T-cell (primary cell): ENCODE measurements at regions of chr3 and their contacts with region 1.

Region 1: GRCh38 chr3:118229196-118229595 is 805.5 kb downstream of the IGSF11 start:
- DNase-seq: no peak
- ATAC-seq: no peak
- H3K4me3 ChIP-seq: no peak overlapping the region
- H3K4me3 Mint-ChIP-seq: no peak overlapping the region
- H3K27ac ChIP-seq: no peak overlapping the region
- H3K27ac Mint-ChIP-seq: no peak overlapping the region
- H3K4me1 ChIP-seq: no peaks in the 10 kb centered on the region
- H3K4me1 Mint-ChIP-seq: no peaks in the 10 kb centered on the region
- H3K27me3 ChIP-seq: no peaks in the 10 kb centered on the region
- H3K27me3 Mint-ChIP-seq: no peaks in the 10 kb centered on the region

Region 2: GRCh38 chr3:117380631-117381030 is 848.6 kb before region 1 on chr3:
- CTCF ChIA-PET with region 1: no interaction called
- POLR2A ChIA-PET with region 1: interaction called in 1 of 2 experiments, 11 read pairs
- DNase-seq: no peak
- ATAC-seq: no peak
- H3K4me3 ChIP-seq: no peak overlapping the region
- H3K4me3 Mint-ChIP-seq: no peak overlapping the region
- H3K27ac ChIP-seq: no peak overlapping the region
- H3K27ac Mint-ChIP-seq: no peak overlapping the region
- H3K4me1 ChIP-seq: no peaks in the 10 kb centered on the region
- H3K4me1 Mint-ChIP-seq: no peaks in the 10 kb centered on the region
- H3K27me3 ChIP-seq: no peaks in the 10 kb centered on the region
- H3K27me3 Mint-ChIP-seq: no peaks in the 10 kb centered on the region

Region 3: DNA sequence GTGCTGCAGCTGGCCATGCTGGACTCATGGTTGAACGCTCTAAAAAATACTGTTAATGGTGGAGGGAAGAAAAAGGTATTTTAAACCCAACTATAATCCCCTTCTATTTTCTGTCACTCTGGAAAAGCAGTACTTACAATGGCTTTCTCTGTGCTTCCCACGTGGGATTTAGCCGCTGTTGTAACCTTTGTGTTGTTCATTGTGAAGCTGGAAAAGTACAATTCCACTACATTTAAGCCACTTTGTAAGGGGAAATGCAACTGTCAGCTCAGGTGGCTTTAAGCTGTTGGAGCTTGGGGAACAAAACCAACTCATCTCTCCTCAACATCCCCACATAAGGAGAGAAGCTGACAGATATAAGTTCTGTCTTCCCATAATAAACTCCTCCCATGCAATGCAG is 112.1 kb before region 1 on chr3:
- CTCF ChIA-PET with region 1: no interaction called
- POLR2A ChIA-PET with region 1: no interaction called
- DNase-seq: no peak
- ATAC-seq: no peak
- H3K4me3 ChIP-seq: no peak overlapping the region
- H3K4me3 Mint-ChIP-seq: no peak overlapping the region
- H3K27ac ChIP-seq: no peak overlapping the region
- H3K27ac Mint-ChIP-seq: no peak overlapping the region
- H3K4me1 ChIP-seq: no peaks in the 10 kb centered on the region
- H3K4me1 Mint-ChIP-seq: no peaks in the 10 kb centered on the region
- H3K27me3 ChIP-seq: no peaks in the 10 kb centered on the region
- H3K27me3 Mint-ChIP-seq: no peaks in the 10 kb centered on the region